ENCODE measurements at regions of chr10 and their contacts with region 1.

Region 1: DNA sequence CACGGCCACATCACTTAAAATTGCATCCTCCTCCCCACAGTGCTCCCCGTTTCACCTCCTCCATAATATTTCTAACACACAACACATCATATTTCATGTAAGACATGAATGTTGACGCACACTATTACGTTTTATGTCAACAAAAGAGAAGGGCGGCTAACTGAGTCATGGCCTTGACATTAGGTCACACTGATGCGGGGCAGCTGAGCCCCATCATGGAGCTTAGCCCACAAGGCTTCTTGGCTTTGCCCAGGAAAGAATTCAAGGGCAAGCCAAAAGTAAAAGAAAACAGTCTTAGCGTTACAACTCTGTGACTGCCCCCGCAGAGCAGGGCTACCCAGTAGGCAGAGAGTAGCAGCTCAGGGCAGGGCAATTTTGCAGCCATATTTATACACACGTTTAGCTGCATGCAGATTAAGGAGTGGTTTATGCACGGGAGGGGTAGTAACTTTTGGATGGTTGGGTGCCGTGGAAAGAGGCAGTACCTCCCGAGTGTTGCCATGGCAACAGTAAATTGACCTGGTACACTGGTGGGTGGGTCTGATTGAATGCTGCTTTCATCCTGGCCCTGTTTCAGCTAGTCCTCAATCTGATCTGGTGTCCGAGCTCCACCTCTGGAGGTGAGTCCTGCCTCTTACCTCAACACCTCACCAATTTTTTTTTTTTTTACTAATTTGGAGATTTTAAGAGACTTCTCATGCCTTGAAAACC is 156.2 kb upstream of the FRMD4A start:
- DNase-seq: no peak
- H3K4me3 ChIP-seq: no peak overlapping the region
- H3K27ac ChIP-seq: no peak overlapping the region
- H3K4me1 ChIP-seq: no peaks in the 10 kb centered on the region
- CTCF ChIP-seq: no peak

Region 2: GRCh38 chr10:14433147-14433546 is 53.8 kb before region 1 on chr10:
- CTCF ChIA-PET with region 1: no interaction called
- POLR2A ChIA-PET with region 1: no interaction called
- intact Hi-C with region 1: no loop called
- DNase-seq: no peak
- H3K4me3 ChIP-seq: no peak overlapping the region
- H3K27ac ChIP-seq: no peak overlapping the region
- H3K4me1 ChIP-seq: no peaks in the 10 kb centered on the region
- CTCF ChIP-seq: no peak

Region 3: GRCh38 chr10:14499601-14499904 is 12.6 kb after region 1 on chr10:
- CTCF ChIA-PET with region 1: no interaction called
- POLR2A ChIA-PET with region 1: interaction called, 11 read pairs
- intact Hi-C with region 1: no loop called
- DNase-seq: no peak
- H3K4me3 ChIP-seq: no peak overlapping the region
- H3K27ac ChIP-seq: no peak overlapping the region
- H3K4me1 ChIP-seq: peaks cover 23% of the 10 kb centered on the region
- CTCF ChIP-seq: no peak

Region 4: DNA sequence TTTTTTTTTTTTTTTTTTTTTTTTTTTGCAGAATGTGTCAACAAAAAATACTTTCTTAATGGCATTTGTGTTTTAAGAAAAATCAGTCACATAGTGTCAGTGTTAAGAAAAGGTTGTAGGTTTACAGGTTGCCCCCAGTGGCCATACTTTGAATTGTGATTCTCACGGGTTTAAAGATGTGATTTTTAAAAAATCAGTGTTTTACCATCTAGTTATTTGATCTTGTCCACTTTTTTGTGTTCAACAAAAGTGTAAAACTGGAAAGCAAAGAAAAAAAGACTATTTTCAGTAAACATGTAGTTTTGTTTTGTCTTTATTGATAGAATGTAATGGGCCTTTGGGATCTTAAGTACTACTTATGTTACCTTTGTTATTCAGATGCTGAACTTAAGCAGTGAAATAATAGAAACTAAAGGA is 417.4 kb after region 1 on chr10:
- CTCF ChIA-PET with region 1: no interaction called
- POLR2A ChIA-PET with region 1: no interaction called
- intact Hi-C with region 1: loop called (anchors 10 kb)
- DNase-seq: peak; percentile 68
- H3K4me3 ChIP-seq: no peak overlapping the region
- H3K27ac ChIP-seq: no peak overlapping the region
- H3K4me1 ChIP-seq: no peaks in the 10 kb centered on the region
- CTCF ChIP-seq: peak; percentile 84